Activated CD8-positive, alpha-beta T cell treated with anti-CD3 and anti-CD28 coated beads for 36 hours (primary cell): ENCODE measurements at regions of chr2 and their contacts with region 1.

Region 1: DNA sequence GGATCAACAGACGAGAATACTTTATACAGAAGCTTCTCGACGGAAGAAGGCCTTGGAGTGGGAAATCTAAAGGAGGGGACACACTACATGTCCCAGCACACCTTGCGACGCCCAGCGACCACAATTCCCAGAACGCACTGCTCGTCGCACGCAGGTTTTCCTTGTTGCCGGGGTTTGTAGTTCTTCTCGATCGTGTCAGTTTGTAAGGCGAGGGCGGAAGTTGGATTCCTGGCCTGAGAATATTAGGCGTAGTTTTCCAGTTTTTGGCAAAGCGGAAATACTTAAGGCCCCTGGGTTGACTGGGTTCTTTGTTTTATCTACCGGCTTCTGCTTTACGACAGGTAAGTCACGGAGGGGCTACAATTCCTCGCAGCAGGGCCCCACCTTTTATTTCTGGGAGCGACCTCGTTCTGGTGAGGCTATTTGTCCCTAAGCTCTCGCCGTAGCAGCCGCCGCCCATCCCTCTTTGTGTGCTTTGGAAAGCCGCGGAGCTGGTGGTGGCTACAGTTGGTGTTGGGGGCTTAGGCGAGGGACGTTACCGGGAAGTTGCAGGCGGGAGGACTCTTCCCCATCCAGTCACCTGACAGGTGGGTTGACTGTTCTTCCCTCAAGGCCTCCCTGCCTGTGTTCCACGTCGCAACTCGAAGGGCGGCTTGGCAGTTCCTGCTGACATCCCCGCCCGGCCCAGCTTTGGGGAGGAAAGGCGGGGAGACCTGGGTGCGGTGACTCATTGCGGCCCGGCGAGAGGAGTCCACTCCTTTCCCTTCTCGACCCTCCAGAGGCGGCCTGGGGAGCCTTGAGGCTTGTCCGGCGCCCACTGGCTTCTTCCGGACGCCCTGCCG is at the start of gene DYNC1I2:
- DNase-seq: peak; percentile 83
- ATAC-seq: peak; percentile 85
- H3K4me3 Mint-ChIP-seq: peak within 1 kb of the TSS; percentile 89
- H3K27ac Mint-ChIP-seq: peak within 1 kb of the TSS; percentile 88
- H3K4me1 Mint-ChIP-seq: peaks cover 17% of the 10 kb centered on the region
- H3K27me3 Mint-ChIP-seq: no peaks in the 10 kb centered on the region
- CTCF ChIP-seq: no peak
- total RNA-seq, gene DYNC1I2: 39.9 to 40.0 TPM

Region 2: DNA sequence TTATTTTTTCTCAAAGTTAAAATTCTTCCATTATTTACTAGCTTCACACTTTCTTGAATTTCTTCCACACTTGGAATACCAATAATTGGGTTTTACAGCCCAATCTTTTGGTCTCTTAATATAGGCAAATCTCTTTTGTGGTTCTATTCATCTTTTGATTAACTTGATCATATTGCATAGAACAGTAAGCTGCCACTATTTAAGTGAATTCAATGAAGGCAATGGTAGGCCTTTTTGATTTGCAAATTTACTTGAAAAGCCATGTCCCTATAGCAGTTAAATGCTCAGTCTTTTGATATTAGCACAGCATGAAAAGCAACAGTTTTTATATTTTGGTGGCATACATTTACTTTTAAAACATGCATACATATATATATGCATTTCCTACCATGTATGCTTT is 20.5 kb before region 1 on chr2:
- CTCF ChIA-PET with region 1: no interaction called
- POLR2A ChIA-PET with region 1: no interaction called
- intact Hi-C with region 1: loop called (anchors 2 kb)
- DNase-seq: no peak
- ATAC-seq: no peak
- H3K4me3 Mint-ChIP-seq: no peak overlapping the region
- H3K27ac Mint-ChIP-seq: no peak overlapping the region
- H3K4me1 Mint-ChIP-seq: no peaks in the 10 kb centered on the region
- H3K27me3 Mint-ChIP-seq: peaks cover 11% of the 10 kb centered on the region
- CTCF ChIP-seq: no peak